Endothelial cell of umbilical vein (primary cell): ENCODE measurements at regions of chr5 and their contacts with region 1.

Region 1: GRCh38 chr5:98928873-98929696 is at the start of gene CHD1:
- DNase-seq: peak; percentile 97
- H3K4me3 ChIP-seq: peak within 1 kb of the TSS; percentile 63 to 86 (median 81)
- H3K27ac ChIP-seq: peak within 1 kb of the TSS; percentile 95
- H3K4me1 ChIP-seq: peaks cover 18% of the 10 kb centered on the region
- H3K27me3 ChIP-seq: no peaks in the 10 kb centered on the region
- CTCF ChIP-seq: no peak
- POLR2A ChIP-seq: peak; percentile 89
- total RNA-seq, gene CHD1: 44.3 and 48.9 TPM in 2 replicates

Region 2: GRCh38 chr5:98905857-98906690 is 23.0 kb before region 1 on chr5:
- CTCF ChIA-PET with region 1: interaction called, 3 read pairs
- POLR2A ChIA-PET with region 1: no interaction called
- dilution Hi-C with region 1: no loop called
- intact Hi-C with region 1: loop called (anchors 1 kb)
- DNase-seq: peak; percentile 66
- H3K4me3 ChIP-seq: no peak overlapping the region
- H3K27ac ChIP-seq: peak overlapping the region; percentile 30
- H3K4me1 ChIP-seq: peaks cover 28% of the 10 kb centered on the region
- H3K27me3 ChIP-seq: no peaks in the 10 kb centered on the region
- CTCF ChIP-seq: peak; percentile 25 to 31
- POLR2A ChIP-seq: no peak

Region 3: DNA sequence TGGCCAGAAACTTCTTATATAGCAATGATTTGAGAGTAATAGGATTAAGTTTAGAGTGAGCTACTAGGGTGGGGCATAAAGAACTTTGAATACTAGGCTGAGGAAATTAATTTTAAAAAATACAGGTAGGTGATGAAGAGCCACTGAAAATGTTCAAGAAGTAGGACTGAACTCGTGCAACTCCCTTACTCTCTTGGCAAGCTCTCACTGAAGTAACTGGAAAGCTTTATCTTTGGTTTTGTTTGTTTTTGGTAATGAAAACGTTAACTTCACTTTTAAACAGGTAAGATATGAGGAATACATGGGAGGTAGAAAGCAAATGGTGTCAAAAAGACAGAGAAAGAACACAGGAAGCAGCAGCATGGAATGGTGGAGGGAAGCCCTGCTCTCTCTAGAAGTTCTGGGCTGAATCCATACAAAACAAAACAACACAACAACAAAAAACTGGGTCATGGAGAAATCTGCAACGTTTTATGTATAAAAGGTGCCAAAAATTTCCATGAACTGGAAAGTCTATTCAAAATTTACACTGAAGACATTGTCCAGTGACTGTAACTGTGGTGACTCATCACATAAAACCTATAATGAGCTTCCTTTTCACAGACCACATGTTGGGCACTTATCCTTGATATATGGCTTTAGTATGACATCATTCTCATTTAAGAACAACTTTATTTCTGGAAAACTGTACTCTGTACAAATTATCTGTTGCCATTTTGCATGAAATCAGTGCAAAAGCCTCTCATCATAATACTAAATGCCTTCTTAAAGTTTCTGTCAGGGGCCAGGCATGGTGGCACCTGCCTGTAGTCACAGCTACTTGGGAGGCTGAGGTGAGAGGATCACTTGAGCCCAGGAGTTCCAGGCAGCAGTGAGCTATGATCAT is 91.0 kb after region 1 on chr5:
- CTCF ChIA-PET with region 1: no interaction called
- POLR2A ChIA-PET with region 1: no interaction called
- dilution Hi-C with region 1: no loop called
- intact Hi-C with region 1: loop called (anchors 1 kb)
- DNase-seq: peak; percentile 93
- H3K4me3 ChIP-seq: peak overlapping the region in 1 of 3 experiments; percentile 19
- H3K27ac ChIP-seq: peak overlapping the region; percentile 74
- H3K4me1 ChIP-seq: peaks cover 16% of the 10 kb centered on the region
- H3K27me3 ChIP-seq: no peaks in the 10 kb centered on the region
- CTCF ChIP-seq: no peak
- POLR2A ChIP-seq: no peak